ENCODE measurements at regions of chr7 and their contacts with region 1.

Region 1: DNA sequence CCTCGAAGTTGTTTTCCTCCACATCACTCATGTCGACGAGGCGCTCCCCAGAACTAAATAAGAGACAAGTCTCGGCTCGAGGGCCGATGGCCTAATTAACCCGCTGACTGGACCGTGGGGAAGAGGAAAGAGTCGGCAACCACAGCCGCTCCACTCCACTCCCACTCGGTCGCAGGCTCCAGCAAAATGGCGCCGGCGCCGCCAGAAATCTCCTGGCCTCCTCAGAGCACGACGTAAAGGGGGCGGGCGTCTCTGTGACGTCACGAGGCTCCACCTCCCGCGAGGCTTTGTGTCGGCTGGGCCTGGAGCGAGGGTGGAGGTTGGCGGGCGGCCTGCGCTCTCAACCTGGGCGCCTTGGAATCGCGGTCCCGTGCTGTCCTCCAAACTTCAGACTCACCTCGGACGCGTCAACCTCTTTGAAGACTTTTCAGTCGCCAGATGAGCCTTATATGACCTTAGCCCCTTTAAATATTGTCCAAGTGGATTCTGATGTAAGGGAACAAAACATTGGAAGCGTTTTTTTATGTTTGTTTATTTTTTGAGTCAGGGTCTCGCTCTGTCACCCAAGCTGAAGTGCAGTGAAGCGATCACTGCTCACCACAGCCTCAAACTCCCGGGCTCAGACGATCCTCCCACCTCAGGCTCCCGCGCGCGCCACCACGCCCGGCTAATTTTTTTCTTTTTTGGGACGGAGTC is at the start of gene TRA2A:
- DNase-seq: peak; percentile 97 to 99 (median 98)
- ATAC-seq: peak; percentile 98 to 99 (median 98)
- H3K4me3 ChIP-seq: peak within 1 kb of the TSS; percentile 36 to 97 (median 84)
- H3K27ac ChIP-seq: peak within 1 kb of the TSS; percentile 83 to 99 (median 96)
- H3K4me1 ChIP-seq: peaks cover 0 to 40% (median 34%) of the 10 kb centered on the region in 12 donors
- H3K27me3 ChIP-seq: no peaks in the 10 kb centered on the region
- CTCF ChIP-seq: no peak
- POLR2A ChIP-seq: peak; percentile 80 to 93
- total RNA-seq, gene TRA2A: 13.2 to 55.7 (median 30.6) TPM

Region 2: DNA sequence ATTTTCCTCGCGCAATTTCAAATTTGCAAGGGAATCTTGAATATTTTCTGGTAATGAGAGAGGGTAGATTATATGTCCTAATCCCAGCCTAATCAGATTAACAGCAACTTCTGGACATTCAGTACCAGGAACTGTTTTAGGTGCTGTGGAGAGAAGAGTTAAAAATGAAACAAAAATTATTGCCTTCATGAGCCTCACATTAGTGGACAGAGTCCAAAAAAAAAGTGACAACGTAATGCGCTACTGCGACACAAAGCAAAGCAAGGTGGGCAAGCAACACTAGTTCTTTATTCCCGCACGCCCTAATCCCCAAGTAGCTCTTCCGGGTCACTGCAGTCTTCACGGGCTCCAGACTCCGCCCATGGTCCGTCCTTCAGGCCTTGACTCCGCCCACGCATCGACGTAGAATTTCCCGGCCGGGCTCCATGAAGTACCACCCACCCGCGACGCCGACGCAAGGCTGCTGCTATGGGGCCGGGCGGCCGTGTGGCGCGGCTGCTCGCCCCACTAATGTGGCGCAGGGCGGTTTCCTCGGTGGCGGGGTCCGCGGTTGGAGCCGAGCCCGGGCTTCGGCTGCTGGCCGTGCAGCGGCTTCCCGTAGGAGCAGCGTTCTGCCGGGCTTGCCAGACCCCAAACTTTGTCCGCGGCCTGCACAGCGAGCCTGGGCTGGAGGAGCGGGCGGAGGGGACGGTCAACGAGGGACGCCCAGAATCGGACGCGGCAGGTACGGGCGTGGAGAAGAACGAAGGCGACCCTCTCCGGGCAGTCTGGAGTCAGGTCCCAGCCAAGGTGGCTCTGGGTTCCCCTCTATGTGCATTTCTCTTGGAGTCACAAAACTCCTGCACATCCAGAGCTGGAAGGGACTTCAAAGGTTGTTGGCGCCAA is 232.8 kb before region 1 on chr7 and contains the start of gene MALSU1:
- intact Hi-C with region 1: loop called in 2 of 10 experiments (anchors 5 to 10 kb)
- DNase-seq: peak; percentile 96 to 98 (median 98)
- ATAC-seq: peak; percentile 98 to 100 (median 100)
- H3K4me3 ChIP-seq: peak within 1 kb of the TSS; percentile 78 to 98 (median 86)
- H3K27ac ChIP-seq: peak within 1 kb of the TSS; percentile 26 to 90 (median 84)
- H3K4me1 ChIP-seq: peaks cover 4 to 48% (median 26%) of the 10 kb centered on the region in 12 donors
- H3K27me3 ChIP-seq: no peaks in the 10 kb centered on the region
- CTCF ChIP-seq: peak in 1 of 12 donors; percentile 12
- POLR2A ChIP-seq: peak; percentile 14 to 90
- total RNA-seq, gene MALSU1: 73.1 to 128 (median 104) TPM

Region 3: GRCh38 chr7:23454881-23455506 is 76.9 kb before region 1 on chr7:
- intact Hi-C with region 1: no loop called
- DNase-seq: no peak
- ATAC-seq: no peak
- H3K4me3 ChIP-seq: no peak overlapping the region
- H3K27ac ChIP-seq: no peak overlapping the region
- H3K4me1 ChIP-seq: no peaks in the 10 kb centered on the region
- H3K27me3 ChIP-seq: peaks cover 0 to 79% (median 15%) of the 10 kb centered on the region in 9 donors
- CTCF ChIP-seq: no peak
- POLR2A ChIP-seq: no peak

Region 4: DNA sequence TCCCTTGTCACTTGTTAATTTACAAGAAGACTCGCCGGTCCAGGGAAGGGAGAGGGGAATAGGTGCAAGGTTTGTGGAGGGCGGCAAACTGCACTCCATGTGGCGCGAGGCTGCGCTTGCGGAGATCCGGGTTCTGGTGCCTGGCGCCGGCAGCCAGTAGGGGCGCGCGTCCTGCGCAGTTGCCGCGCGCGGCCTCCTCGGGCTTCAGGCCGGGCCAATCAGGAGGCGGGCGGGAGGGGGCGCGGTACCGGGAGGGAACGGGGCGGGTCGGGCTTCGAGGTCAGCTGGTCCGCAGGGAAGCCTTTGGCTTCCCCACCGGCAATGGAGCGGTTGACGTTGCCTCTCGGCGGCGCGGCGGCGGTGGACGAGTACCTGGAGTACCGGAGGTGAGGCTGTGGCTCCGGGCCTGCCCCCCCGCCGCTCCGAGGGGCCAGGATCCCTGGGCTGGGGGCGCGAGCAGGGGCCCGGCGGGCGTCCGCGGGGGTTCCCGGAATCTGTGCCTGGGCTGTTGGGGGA is 148.0 kb after region 1 on chr7 and contains the start of gene FAM221A:
- intact Hi-C with region 1: loop called in 1 of 10 experiments (anchors 2 kb)
- DNase-seq: peak; percentile 90 to 94 (median 92)
- ATAC-seq: peak; percentile 94 to 100 (median 100)
- H3K4me3 ChIP-seq: peak within 1 kb of the TSS; percentile 60 to 96 (median 84)
- H3K27ac ChIP-seq: peak within 1 kb of the TSS; percentile 53 to 86 (median 82)
- H3K4me1 ChIP-seq: peaks cover 0 to 19% (median 7%) of the 10 kb centered on the region in 12 donors
- H3K27me3 ChIP-seq: no peaks in the 10 kb centered on the region
- CTCF ChIP-seq: peak; percentile 63 to 81 (median 79)
- POLR2A ChIP-seq: peak in 1 of 2 donors; percentile 42
- total RNA-seq, gene FAM221A: 2.7 to 6.7 (median 3.4) TPM

Measured in heart left ventricle (tissue), 16 donors.